ENCODE measurements at regions of chr1 and their contacts with region 1.

Region 1: GRCh38 chr1:76901158-76901767 is 34.0 kb downstream of the ST6GALNAC5 start:
- DNase-seq: no peak
- ATAC-seq: no peak
- H3K4me3 ChIP-seq: no peak overlapping the region
- H3K27ac ChIP-seq: no peak overlapping the region
- H3K4me1 ChIP-seq: no peaks in the 10 kb centered on the region
- H3K27me3 ChIP-seq: no peaks in the 10 kb centered on the region
- CTCF ChIP-seq: peak in 11 of 12 donors; percentile 19 to 55 (median 47)
- POLR2A ChIP-seq: no peak

Region 2: DNA sequence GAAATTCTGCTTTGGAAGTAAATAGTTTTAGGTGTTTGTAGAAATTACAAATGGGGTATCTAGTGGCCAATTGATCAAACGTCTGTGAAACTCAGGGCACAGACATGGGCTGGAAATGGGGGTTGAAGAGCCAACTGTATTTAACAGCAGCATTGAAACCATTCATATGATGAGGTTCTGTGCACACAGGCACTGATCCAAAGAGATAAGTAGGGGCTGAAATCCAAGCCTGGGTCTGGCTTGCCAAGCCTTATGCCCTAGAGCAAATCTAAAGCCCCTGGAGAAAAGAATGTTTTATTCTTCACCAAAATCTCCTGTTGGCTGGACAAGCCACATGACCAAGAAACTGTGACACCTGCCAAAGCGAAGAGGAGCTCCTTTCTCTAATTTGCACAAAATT is 101.6 kb before region 1 on chr1:
- intact Hi-C with region 1: no loop called
- DNase-seq: no peak
- ATAC-seq: no peak
- H3K4me3 ChIP-seq: no peak overlapping the region
- H3K27ac ChIP-seq: no peak overlapping the region
- H3K4me1 ChIP-seq: no peaks in the 10 kb centered on the region
- H3K27me3 ChIP-seq: no peaks in the 10 kb centered on the region
- CTCF ChIP-seq: no peak
- POLR2A ChIP-seq: no peak

Region 3: GRCh38 chr1:76843821-76844448 is 57.3 kb before region 1 on chr1:
- intact Hi-C with region 1: loop called in 1 of 10 experiments (anchors 10 kb)
- DNase-seq: no peak
- ATAC-seq: no peak
- H3K4me3 ChIP-seq: no peak overlapping the region
- H3K27ac ChIP-seq: no peak overlapping the region
- H3K4me1 ChIP-seq: no peaks in the 10 kb centered on the region
- H3K27me3 ChIP-seq: no peaks in the 10 kb centered on the region
- CTCF ChIP-seq: no peak
- POLR2A ChIP-seq: no peak

Measured in heart left ventricle (tissue), 16 donors.